HCT116 (cell line): ENCODE measurements at regions of chr21 and their contacts with region 1.

Region 1: GRCh38 chr21:43611598-43612369 is 47.5 kb downstream of the HSF2BP start:
- DNase-seq: peak; percentile 59
- ATAC-seq: peak; percentile 98
- H3K4me3 ChIP-seq: no peak overlapping the region; a peak in 1 of 4 replicates
- H3K27ac ChIP-seq: peak overlapping the region; percentile 59
- H3K4me1 ChIP-seq: peaks cover 13 to 24% of the 10 kb centered on the region in 2 experiments; a peak in 3 of 4 replicates
- H3K27me3 ChIP-seq: no peaks in the 10 kb centered on the region
- CTCF ChIP-seq: peak; percentile 57 to 91 (median 90); a peak in 5 of 6 replicates
- POLR2A ChIP-seq: no peak
- RAD21 ChIP-seq: peak; percentile 58

Region 2: GRCh38 chr21:43646550-43647260 is 34.9 kb after region 1 on chr21:
- CTCF ChIA-PET with region 1: interaction called, 4 read pairs
- POLR2A ChIA-PET with region 1: no interaction called
- RAD21 ChIA-PET with region 1: no interaction called
- intact Hi-C with region 1: loop called (anchors 2 kb)
- DNase-seq: peak; percentile 88
- ATAC-seq: peak; percentile 99
- H3K4me3 ChIP-seq: peak overlapping the region in 1 of 2 experiments; percentile 21; a peak in 2 of 4 replicates
- H3K27ac ChIP-seq: no peak overlapping the region
- H3K4me1 ChIP-seq: peaks cover 4 to 11% of the 10 kb centered on the region in 2 experiments; a peak in 3 of 4 replicates
- H3K27me3 ChIP-seq: no peaks in the 10 kb centered on the region
- CTCF ChIP-seq: peak; percentile 87 to 99 (median 96)
- POLR2A ChIP-seq: no peak
- RAD21 ChIP-seq: peak; percentile 98